Right ventricle myocardium inferior (tissue), 1 donor: ENCODE measurements at regions of chr3 and their contacts with region 1.

Region 1: DNA sequence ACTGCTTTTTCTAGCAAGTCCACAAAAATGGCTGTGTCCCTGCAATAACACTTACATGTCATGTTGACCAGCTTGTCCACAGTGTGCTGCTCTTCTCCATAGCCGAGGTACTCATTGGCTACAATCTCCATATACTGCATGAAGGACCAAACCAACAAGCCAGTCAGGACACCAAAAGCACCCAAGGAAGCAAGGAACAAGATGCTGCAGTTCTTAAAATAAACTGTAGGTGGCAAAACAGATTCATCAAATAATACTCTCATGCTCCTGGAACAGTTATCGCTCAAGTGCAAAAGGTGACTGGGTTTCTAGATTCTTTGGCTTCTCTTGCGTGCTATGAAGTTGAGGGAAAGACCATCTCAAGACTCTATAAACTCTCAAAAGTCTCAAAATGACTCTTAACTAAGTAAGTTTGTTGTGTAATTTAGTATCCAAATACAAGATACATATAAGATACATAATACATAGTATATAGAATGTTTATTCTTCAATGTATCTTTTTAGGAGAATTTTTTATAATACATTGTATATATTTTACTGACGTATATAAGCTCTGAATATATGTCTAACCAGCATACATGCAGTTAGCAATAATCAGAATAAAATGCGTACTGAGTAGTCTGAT is 57.0 kb downstream of the NEK10 start:
- DNase-seq: no peak
- ATAC-seq: peak; percentile 64

Region 2: DNA sequence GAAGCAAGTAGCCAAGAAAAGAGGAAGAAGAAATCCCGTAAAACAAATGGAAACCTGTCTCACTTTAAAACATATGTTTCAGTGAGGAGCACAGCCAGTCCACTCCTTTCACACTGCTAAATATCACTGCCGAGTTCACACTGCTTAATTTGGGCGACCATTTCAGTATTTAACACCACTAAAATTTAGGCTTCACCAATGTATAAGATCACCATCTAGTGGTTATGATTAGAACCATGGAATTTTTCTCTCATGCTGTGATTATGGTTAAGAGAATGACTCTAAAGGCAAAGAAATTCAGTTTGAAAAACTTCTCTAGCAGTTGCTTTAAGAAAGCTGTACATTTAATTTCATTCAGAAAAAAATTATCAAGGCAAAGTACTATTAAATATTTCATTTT is 155.4 kb after region 1 on chr3:
- intact Hi-C with region 1: loop called (anchors 1 kb)
- DNase-seq: no peak
- ATAC-seq: peak; percentile 64

Region 3: GRCh38 chr3:27679691-27680090 is 367.5 kb after region 1 on chr3:
- intact Hi-C with region 1: loop called (anchors 2 kb)
- DNase-seq: no peak
- ATAC-seq: no peak